ENCODE measurements at regions of chr10 and their contacts with region 1.

Region 1: GRCh38 chr10:93893646-93894515 is at the start of gene SLC35G1:
- DNase-seq: peak in 1 of 2 donors; percentile 18
- H3K4me3 ChIP-seq: peak within 1 kb of the TSS; percentile 82 to 92 (median 85)
- H3K27ac ChIP-seq: peak within 1 kb of the TSS; percentile 14 to 34
- H3K4me1 ChIP-seq: no peaks in the 10 kb centered on the region
- H3K27me3 ChIP-seq: no peaks in the 10 kb centered on the region
- CTCF ChIP-seq: no peak
- POLR2A ChIP-seq: no peak
- total RNA-seq, gene SLC35G1: 2.9 to 7.0 (median 3.9) TPM

Region 2: GRCh38 chr10:94183666-94184264 is 289.9 kb after region 1 on chr10:
- intact Hi-C with region 1: loop called (anchors 1 kb)
- DNase-seq: no peak
- H3K4me3 ChIP-seq: no peak overlapping the region
- H3K27ac ChIP-seq: no peak overlapping the region
- H3K4me1 ChIP-seq: no peaks in the 10 kb centered on the region
- H3K27me3 ChIP-seq: no peaks in the 10 kb centered on the region
- CTCF ChIP-seq: no peak
- POLR2A ChIP-seq: no peak

Measured in breast epithelium (tissue), 4 donors.